ENCODE measurements at regions of chr4 and their contacts with region 1.

Region 1: DNA sequence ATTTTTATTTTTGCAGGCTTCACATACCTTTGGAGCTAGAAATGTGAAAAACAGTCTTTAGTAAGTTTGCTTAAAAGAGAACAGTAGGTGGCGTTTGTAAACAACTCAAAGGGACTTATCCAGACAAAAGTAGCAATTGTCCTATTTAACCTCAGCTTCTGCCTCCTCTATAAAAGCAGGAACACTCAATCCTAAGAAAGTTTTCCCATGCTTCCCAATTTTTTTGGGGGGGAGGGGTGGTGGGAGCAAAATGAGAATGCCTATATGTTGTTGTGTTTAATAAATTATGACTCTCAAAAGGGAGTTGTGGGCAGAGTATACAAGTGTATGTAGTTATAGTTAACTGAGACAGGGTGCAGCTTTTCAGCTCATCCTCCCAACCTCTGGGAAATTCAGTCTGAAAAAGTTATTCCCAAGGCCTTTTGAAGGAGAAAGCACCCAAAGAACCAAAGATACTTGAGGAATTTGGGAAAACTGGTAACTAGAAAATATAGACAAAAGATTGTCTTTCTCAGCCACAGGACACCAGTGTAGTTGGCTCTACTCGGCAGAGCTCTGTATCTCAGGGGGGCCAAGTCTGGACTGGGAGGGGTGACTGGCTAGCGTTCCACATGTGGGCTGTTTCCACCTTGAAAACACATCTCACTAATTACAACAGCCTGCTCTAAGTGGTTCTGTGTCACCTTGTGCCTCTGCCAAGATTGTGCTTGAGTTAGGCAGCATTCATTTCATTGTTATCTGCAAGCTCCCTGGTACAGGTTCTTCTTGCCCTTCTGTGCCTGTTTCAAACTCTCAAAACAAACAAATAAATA is 2.8 kb downstream of the SFRP2 start:
- DNase-seq: no peak
- H3K4me3 Mint-ChIP-seq: no peak overlapping the region
- H3K27ac Mint-ChIP-seq: no peak overlapping the region
- H3K4me1 Mint-ChIP-seq: peaks cover 14% of the 10 kb centered on the region
- H3K27me3 Mint-ChIP-seq: peaks cover 15% of the 10 kb centered on the region
- CTCF ChIP-seq: no peak

Region 2: DNA sequence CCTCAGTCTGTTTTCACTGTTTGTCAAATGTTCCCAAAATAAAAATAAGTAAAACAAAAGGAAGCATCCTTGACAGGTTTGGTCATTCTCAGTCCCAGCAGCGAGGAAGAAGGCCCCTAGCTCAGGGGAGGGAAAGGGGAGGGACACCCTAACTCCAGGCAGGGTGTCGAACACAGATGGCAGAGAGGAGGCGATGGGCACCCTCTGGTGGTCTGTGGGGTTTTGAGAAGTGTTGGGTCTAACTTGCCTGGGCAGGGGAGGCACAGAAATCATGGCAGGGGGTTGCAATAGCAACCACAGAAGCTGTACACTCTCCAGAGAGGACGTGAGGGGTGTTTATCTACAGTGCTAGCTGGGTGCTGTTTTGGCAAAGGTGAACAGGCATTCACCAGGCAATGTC is 232.5 kb after region 1 on chr4:
- CTCF ChIA-PET with region 1: interaction called, 9 read pairs
- intact Hi-C with region 1: loop called (anchors 2 kb)
- DNase-seq: peak; percentile 27
- H3K4me3 Mint-ChIP-seq: no peak overlapping the region
- H3K27ac Mint-ChIP-seq: no peak overlapping the region
- H3K4me1 Mint-ChIP-seq: no peaks in the 10 kb centered on the region
- H3K27me3 Mint-ChIP-seq: no peaks in the 10 kb centered on the region
- CTCF ChIP-seq: no peak

Region 3: DNA sequence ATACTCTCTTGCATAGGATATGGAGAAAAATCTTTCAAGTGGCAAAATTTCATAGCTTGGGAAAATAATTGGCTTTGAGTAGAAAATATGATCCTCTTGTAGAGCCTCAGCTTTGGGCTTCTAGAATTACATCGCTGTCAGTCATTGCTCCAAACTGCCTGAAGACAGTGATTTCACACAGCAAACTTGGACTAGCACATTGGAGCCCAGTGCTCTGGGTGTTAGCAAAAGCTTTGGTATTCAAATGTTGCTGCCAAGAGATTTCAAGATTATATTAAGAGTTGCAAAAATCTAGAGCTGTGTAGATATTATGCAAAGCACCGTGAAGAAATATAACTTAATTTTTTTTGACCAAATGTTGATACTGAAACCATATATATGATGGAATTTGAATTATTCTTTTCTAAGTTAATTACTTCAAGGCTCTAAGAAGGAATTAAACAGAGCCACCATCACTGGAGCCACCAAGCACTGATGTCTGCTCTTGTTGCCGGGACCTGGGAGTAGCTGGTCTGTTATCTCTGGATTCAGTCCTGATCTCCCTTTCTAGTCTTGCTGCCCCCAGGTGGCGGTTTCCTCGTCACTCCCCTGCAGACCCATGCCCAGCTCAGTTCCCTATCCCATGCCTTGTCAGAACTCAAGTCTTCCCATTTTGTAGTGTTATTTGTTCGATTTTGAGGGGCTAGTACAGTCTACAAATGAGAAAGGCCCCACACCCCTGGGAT is 263.5 kb after region 1 on chr4:
- CTCF ChIA-PET with region 1: interaction called, 13 read pairs
- intact Hi-C with region 1: loop called (anchors 10 kb)
- DNase-seq: peak; percentile 34
- H3K4me3 Mint-ChIP-seq: no peak overlapping the region
- H3K27ac Mint-ChIP-seq: no peak overlapping the region
- H3K4me1 Mint-ChIP-seq: peaks cover 3% of the 10 kb centered on the region
- H3K27me3 Mint-ChIP-seq: peaks cover 14% of the 10 kb centered on the region
- CTCF ChIP-seq: no peak

Region 4: GRCh38 chr4:154132406-154132805 is 346.3 kb after region 1 on chr4:
- CTCF ChIA-PET with region 1: no interaction called
- intact Hi-C with region 1: loop called (anchors 5 kb)
- DNase-seq: no peak
- H3K4me3 Mint-ChIP-seq: no peak overlapping the region
- H3K27ac Mint-ChIP-seq: no peak overlapping the region
- H3K4me1 Mint-ChIP-seq: no peaks in the 10 kb centered on the region
- H3K27me3 Mint-ChIP-seq: peaks cover 12% of the 10 kb centered on the region
- CTCF ChIP-seq: no peak

Region 5: DNA sequence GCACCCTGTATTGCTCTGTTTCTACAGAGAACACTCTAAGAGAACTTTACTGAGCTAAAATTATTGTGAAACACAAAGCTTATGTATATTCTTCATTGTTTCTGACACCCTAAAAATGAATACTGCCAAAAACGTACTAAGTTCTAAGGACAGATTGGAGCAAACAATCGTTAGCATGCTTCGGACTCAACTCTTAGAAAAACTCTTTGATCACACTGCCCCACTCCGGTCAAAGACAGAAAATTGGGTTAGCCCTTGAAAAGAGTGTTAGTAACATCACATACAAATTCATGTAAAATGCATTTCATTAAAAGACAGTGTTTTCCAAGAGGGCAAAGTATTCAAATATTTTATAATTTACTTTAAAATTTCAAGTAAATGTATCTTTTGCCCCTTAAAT is 528.1 kb after region 1 on chr4:
- CTCF ChIA-PET with region 1: interaction called, 4 read pairs
- intact Hi-C with region 1: loop called (anchors 1 kb)
- DNase-seq: peak; percentile 21
- H3K4me3 Mint-ChIP-seq: no peak overlapping the region
- H3K27ac Mint-ChIP-seq: no peak overlapping the region
- H3K4me1 Mint-ChIP-seq: peaks cover 9% of the 10 kb centered on the region
- H3K27me3 Mint-ChIP-seq: no peaks in the 10 kb centered on the region
- CTCF ChIP-seq: no peak

Measured in Calu3 (cell line).